Gastrocnemius medialis (tissue), 4 donors: ENCODE measurements at regions of chr2 and their contacts with region 1.

Region 1: DNA sequence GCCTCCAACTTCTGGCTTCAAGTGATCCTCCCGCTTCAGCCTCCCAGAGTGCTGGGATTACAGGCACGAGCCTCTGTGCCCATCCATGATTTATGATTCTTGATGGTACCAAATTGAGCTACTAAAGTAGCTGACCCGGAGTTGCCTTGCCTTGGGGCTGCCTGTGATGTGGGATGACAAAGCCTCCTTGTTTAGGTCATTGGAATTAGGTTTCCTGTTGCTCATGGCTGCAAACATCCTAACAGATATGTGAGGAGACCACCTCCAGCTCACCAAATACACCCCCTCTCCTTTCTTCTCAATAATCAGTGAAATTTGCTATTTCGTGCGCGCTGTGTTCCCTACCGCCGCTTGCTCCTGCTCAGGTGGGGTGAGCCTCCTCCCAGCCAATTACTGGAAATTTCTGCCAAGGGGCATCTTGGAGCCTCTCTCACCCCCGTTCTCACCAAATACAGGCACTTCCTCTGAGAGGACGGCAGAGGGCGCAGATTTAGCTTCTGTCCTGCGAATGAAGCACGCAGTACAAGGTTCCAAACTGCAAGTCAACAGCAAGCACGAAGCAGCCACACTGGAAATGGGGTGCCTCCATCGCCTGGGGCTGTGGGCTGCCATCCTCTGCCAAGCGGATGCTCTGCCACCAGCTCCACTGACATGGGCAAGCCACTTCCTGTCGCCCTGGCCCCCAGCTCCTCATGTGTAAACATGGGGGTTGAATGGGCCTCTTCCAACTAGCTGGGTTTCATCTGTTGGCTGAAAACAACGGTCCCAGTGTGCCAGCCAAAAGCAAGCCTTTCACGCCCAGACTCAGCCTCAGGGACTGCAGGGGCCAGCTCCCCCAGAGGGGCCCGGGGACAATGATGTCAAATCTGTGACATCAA is 71.7 kb downstream of the NCAPH start:
- DNase-seq: peak; percentile 43 to 55
- ATAC-seq: peak; percentile 71 to 76
- H3K4me3 ChIP-seq: no peak overlapping the region
- H3K27ac ChIP-seq: no peak overlapping the region
- H3K4me1 ChIP-seq: peaks cover 0 to 14% of the 10 kb centered on the region in 2 donors
- H3K27me3 ChIP-seq: no peaks in the 10 kb centered on the region
- CTCF ChIP-seq: peak; percentile 52 to 87 (median 83)
- POLR2A ChIP-seq: no peak

Region 2: GRCh38 chr2:96305091-96305978 is 101.9 kb before region 1 on chr2 and contains the start of gene SNRNP200:
- in situ Hi-C with region 1: no loop called
- intact Hi-C with region 1: loop called (anchors 5 kb)
- DNase-seq: peak; percentile 74 to 80
- ATAC-seq: peak; percentile 98 to 99
- H3K4me3 ChIP-seq: peak within 1 kb of the TSS; percentile 83 to 95 (median 89)
- H3K27ac ChIP-seq: peak within 1 kb of the TSS; percentile 81 to 92 (median 88)
- H3K4me1 ChIP-seq: peaks cover 17 to 18% of the 10 kb centered on the region in 2 donors
- H3K27me3 ChIP-seq: no peaks in the 10 kb centered on the region
- CTCF ChIP-seq: no peak
- POLR2A ChIP-seq: peak; percentile 61 to 80
- total RNA-seq, gene SNRNP200: 51.1 to 89.8 (median 67.4) TPM

Region 3: GRCh38 chr2:96514521-96514920 is 107.2 kb after region 1 on chr2:
- in situ Hi-C with region 1: loop called (anchors 5 kb)
- intact Hi-C with region 1: loop called (anchors 2 kb)
- DNase-seq: no peak
- ATAC-seq: no peak
- H3K4me3 ChIP-seq: no peak overlapping the region
- H3K27ac ChIP-seq: no peak overlapping the region
- H3K4me1 ChIP-seq: peaks cover 6 to 8% of the 10 kb centered on the region in 2 donors
- H3K27me3 ChIP-seq: no peaks in the 10 kb centered on the region
- CTCF ChIP-seq: no peak
- POLR2A ChIP-seq: no peak